ENCODE measurements at regions of chr5 and their contacts with region 1.

Region 1: DNA sequence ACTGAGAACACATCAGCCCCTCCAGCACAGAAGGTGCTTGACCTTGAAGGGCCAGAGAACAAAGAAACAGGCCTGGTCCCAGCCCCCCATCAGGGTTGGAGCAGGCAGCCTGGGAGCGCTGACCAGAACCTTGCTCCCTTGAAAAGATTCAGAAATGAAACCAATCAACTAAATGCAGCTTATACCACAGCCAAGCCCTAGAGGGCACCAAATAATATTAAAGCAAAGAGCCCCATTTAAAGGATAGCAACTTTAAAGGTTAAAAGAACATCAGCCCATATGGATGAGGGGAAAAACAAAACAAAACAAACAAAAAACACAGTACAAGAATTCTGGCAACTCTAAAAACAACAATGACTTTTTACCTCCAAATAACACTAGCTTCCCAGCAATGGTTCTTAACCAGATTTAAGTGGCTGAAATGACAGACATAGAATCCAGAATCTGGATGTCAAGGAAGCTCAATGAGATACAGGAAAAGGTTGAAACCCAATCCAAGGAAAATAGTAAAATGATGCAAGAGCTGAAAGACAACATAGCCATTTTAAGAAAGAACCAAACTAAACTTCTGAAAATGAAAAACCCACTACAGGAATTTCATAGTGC is 471.9 kb downstream of the MTRR start:
- DNase-seq: no peak
- H3K4me3 ChIP-seq: no peak overlapping the region
- H3K27me3 ChIP-seq: no peaks in the 10 kb centered on the region
- CTCF ChIP-seq: peak; percentile 72

Region 2: DNA sequence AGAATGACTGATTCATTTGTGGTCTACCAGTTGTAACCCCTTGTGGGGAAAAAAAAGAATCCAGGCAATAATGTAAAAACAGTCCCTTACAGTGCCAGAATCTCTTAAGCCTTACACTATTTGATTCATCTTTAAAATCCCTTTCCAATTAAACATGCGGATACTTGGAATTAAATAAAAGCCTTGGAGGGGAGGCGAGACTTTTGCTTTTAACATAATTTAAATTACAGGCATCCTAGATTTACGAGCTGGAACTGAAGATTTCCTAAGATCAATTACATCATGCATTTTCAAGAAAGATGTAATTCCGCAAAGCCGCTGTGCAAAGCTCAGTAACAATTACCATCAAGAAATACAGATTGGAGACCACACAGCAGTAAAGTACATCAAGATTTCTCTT is 101.6 kb before region 1 on chr5:
- CTCF ChIA-PET with region 1: no interaction called
- POLR2A ChIA-PET with region 1: no interaction called
- DNase-seq: no peak
- H3K4me3 ChIP-seq: no peak overlapping the region
- H3K27me3 ChIP-seq: no peaks in the 10 kb centered on the region
- CTCF ChIP-seq: no peak

Region 3: GRCh38 chr5:8355981-8356380 is 15.1 kb after region 1 on chr5:
- CTCF ChIA-PET with region 1: interaction called, 10 read pairs
- POLR2A ChIA-PET with region 1: no interaction called
- DNase-seq: no peak
- H3K4me3 ChIP-seq: no peak overlapping the region
- H3K27me3 ChIP-seq: no peaks in the 10 kb centered on the region
- CTCF ChIP-seq: no peak